Prostate gland (tissue), 2 donors: ENCODE measurements at regions of chr18 and their contacts with region 1.

Region 1: GRCh38 chr18:41096504-41096903 is 858.5 kb upstream of the PIK3C3 start:
- DNase-seq: no peak
- H3K4me3 ChIP-seq: no peak overlapping the region
- H3K27ac ChIP-seq: no peak overlapping the region
- H3K4me1 ChIP-seq: no peaks in the 10 kb centered on the region
- H3K27me3 ChIP-seq: no peaks in the 10 kb centered on the region
- CTCF ChIP-seq: no peak
- POLR2A ChIP-seq: no peak

Region 2: GRCh38 chr18:41025666-41026065 is 70.8 kb before region 1 on chr18:
- intact Hi-C with region 1: loop called (anchors 2 kb)
- DNase-seq: no peak
- H3K4me3 ChIP-seq: no peak overlapping the region
- H3K27ac ChIP-seq: no peak overlapping the region
- H3K4me1 ChIP-seq: no peaks in the 10 kb centered on the region
- H3K27me3 ChIP-seq: no peaks in the 10 kb centered on the region
- CTCF ChIP-seq: no peak
- POLR2A ChIP-seq: no peak

Region 3: DNA sequence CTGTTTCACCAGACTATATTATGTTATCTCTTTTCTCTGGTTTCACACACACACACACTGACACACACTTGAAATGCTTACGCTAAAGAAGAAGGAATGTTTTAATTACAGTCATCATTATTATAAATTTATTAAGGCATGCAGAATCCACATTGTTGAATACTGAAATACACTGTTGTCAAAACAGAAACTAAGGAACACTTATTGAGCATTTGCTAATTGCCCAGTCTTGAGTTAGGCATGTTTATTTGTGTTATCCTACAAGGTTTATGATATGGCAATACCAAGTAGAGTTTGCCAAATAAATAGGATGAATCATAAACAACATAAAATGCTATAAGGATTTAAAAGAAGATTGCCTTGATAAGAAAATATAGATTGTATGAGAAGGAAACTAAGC is 58.4 kb before region 1 on chr18:
- intact Hi-C with region 1: no loop called
- DNase-seq: no peak
- H3K4me3 ChIP-seq: no peak overlapping the region
- H3K27ac ChIP-seq: no peak overlapping the region
- H3K4me1 ChIP-seq: no peaks in the 10 kb centered on the region
- H3K27me3 ChIP-seq: no peaks in the 10 kb centered on the region
- CTCF ChIP-seq: no peak
- POLR2A ChIP-seq: no peak

Region 4: GRCh38 chr18:41226186-41226585 is 129.7 kb after region 1 on chr18:
- intact Hi-C with region 1: no loop called
- DNase-seq: no peak
- H3K4me3 ChIP-seq: no peak overlapping the region
- H3K27ac ChIP-seq: no peak overlapping the region
- H3K4me1 ChIP-seq: no peaks in the 10 kb centered on the region
- H3K27me3 ChIP-seq: no peaks in the 10 kb centered on the region
- CTCF ChIP-seq: no peak
- POLR2A ChIP-seq: no peak